Activated CD4-positive, alpha-beta T cell treated with anti-CD3 and anti-CD28 coated beads, Interleukin-2, amount 10 ng/mL, durations not matched to agents 24 days and 14 days (primary cell): ENCODE measurements at regions of chr11 and their contacts with region 1.

Region 1: GRCh38 chr11:86182976-86183584 is 61.5 kb upstream of the EED start:
- DNase-seq: peak; percentile 83
- H3K4me3 Mint-ChIP-seq: no peak overlapping the region
- H3K27ac Mint-ChIP-seq: no peak overlapping the region
- H3K4me1 Mint-ChIP-seq: peaks cover 17% of the 10 kb centered on the region
- H3K27me3 Mint-ChIP-seq: no peaks in the 10 kb centered on the region

Region 2: GRCh38 chr11:86116386-86116726 is 66.7 kb before region 1 on chr11:
- intact Hi-C with region 1: loop called (anchors 2 kb)
- DNase-seq: peak; percentile 70
- H3K4me3 Mint-ChIP-seq: peak overlapping the region; percentile 24
- H3K27ac Mint-ChIP-seq: peak overlapping the region; percentile 69
- H3K4me1 Mint-ChIP-seq: peaks cover 30% of the 10 kb centered on the region
- H3K27me3 Mint-ChIP-seq: peaks cover 2% of the 10 kb centered on the region

Region 3: DNA sequence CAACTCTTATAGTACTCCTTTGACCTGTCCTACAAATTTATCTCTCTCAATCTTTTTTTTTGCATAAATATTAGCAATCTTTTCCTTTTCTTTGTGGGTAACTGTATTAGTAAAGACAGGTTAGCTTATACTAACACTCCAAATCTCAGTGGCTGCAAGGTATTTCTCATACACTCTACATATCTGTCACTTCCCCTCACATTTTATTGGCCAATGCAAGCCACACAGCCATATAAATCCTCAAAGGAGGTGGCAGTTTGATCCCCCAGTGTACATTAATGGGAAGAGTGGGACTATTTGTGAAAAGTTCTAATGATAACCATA is 18.9 kb after region 1 on chr11:
- intact Hi-C with region 1: loop called (anchors 1 kb)
- DNase-seq: peak; percentile 70
- H3K4me3 Mint-ChIP-seq: no peak overlapping the region
- H3K27ac Mint-ChIP-seq: no peak overlapping the region
- H3K4me1 Mint-ChIP-seq: peaks cover 14% of the 10 kb centered on the region
- H3K27me3 Mint-ChIP-seq: no peaks in the 10 kb centered on the region

Region 4: GRCh38 chr11:86403458-86403857 is 220.4 kb after region 1 on chr11:
- intact Hi-C with region 1: no loop called
- DNase-seq: no peak
- H3K4me3 Mint-ChIP-seq: no peak overlapping the region
- H3K27ac Mint-ChIP-seq: no peak overlapping the region
- H3K4me1 Mint-ChIP-seq: no peaks in the 10 kb centered on the region
- H3K27me3 Mint-ChIP-seq: no peaks in the 10 kb centered on the region